ENCODE measurements at regions of chr2 and their contacts with region 1.

Region 1: DNA sequence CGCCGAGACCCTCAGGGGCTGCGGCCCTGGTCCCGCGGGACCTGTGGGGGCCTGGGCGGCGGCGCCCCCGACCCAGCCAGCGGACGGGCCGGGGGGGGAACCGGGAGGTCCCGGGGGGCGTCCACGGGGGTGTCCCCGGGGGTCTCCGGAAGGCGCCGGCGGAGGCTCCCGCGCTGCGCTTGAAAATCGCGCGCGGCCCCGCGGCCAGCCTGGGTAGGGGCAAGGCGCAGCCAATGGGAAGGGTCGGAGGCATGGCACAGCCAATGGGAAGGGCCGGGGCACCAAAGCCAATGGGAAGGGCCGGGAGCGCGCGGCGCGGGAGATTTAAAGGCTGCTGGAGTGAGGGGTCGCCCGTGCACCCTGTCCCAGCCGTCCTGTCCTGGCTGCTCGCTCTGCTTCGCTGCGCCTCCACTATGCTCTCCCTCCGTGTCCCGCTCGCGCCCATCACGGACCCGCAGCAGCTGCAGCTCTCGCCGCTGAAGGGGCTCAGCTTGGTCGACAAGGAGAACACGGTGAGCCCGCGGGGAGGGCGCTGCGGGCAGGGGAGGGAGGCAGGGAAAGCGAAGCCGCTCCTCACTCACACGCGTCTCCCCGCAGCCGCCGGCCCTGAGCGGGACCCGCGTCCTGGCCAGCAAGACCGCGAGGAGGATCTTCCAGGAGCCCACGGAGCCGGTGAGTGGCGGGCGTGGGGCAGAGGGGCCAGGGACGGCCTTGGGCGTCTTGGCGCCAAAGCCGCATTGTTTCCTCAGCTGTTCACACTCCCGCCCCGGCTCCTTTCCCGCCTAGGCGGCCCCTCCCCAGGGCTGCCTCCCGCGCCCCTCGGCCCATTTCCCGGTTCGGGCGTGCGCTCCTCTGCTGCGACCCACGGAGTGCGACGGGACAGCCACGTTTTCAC is at the start of gene RRM2:
- DNase-seq: peak; percentile 76 to 86 (median 84)
- H3K4me3 ChIP-seq: peak within 1 kb of the TSS; percentile 64 to 85 (median 68)
- H3K4me3 Mint-ChIP-seq: peak within 1 kb of the TSS; percentile 89 to 95
- H3K27ac ChIP-seq: peak within 1 kb of the TSS in 1 of 2 donors; percentile 66
- H3K27ac Mint-ChIP-seq: peak within 1 kb of the TSS; percentile 76 to 99 (median 92)
- H3K4me1 ChIP-seq: peaks cover 51 to 77% of the 10 kb centered on the region in 2 donors
- H3K4me1 Mint-ChIP-seq: peaks cover 58% of the 10 kb centered on the region
- H3K27me3 ChIP-seq: no peaks in the 10 kb centered on the region
- H3K27me3 Mint-ChIP-seq: no peaks in the 10 kb centered on the region
- CTCF ChIP-seq: no peak
- polyA plus RNA-seq, gene RRM2: 1.5 TPM in 1 of 3 donors, not detected in the others

Region 2: DNA sequence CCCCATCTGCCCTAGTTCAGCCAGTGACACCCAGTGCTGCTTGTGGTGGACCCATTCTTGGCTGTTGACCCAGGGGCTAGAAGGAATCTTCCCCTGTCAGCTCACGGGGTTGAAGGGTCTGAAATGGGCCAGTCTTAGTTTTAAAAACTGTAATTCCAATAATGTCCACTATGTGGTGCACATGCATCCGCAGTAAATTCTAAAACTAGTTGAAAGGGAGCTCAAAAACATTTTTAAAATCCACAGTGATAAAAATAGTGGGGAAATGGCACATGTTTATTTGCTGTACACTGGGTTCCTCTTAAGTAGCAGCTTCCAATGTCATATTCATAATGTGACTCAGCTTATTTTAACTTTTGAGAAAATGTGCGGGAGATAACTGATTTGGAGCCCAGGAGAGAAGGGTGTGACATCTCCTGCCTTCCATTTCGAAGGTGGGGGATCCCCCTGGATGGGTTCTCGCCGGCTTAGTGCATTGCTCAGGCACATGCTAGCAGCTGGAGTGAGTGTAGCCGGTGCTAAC is 138.4 kb before region 1 on chr2:
- intact Hi-C with region 1: loop called in 1 of 2 experiments (anchors 10 kb)
- DNase-seq: peak; percentile 52 to 74 (median 61)
- H3K4me3 ChIP-seq: no peak overlapping the region
- H3K4me3 Mint-ChIP-seq: peak overlapping the region; percentile 45 to 70
- H3K27ac ChIP-seq: no peak overlapping the region
- H3K27ac Mint-ChIP-seq: peak overlapping the region in 3 of 7 donors; percentile 32 to 73 (median 65)
- H3K4me1 ChIP-seq: peaks cover 3 to 8% of the 10 kb centered on the region in 2 donors
- H3K4me1 Mint-ChIP-seq: peaks cover 7% of the 10 kb centered on the region
- H3K27me3 ChIP-seq: no peaks in the 10 kb centered on the region
- H3K27me3 Mint-ChIP-seq: peaks cover 10 to 17% (median 13%) of the 10 kb centered on the region in 3 donors
- CTCF ChIP-seq: peak; percentile 79

Region 3: GRCh38 chr2:10188216-10188615 is 65.6 kb after region 1 on chr2:
- intact Hi-C with region 1: no loop called
- DNase-seq: no peak
- H3K4me3 ChIP-seq: no peak overlapping the region
- H3K4me3 Mint-ChIP-seq: no peak overlapping the region
- H3K27ac ChIP-seq: no peak overlapping the region
- H3K27ac Mint-ChIP-seq: peak overlapping the region in 2 of 7 donors; percentile 3 to 37
- H3K4me1 ChIP-seq: no peaks in the 10 kb centered on the region
- H3K4me1 Mint-ChIP-seq: no peaks in the 10 kb centered on the region
- H3K27me3 ChIP-seq: no peaks in the 10 kb centered on the region
- H3K27me3 Mint-ChIP-seq: peaks cover 0 to 6% (median 2%) of the 10 kb centered on the region in 3 donors
- CTCF ChIP-seq: no peak

Region 4: GRCh38 chr2:10278029-10278762 is 155.6 kb after region 1 on chr2:
- intact Hi-C with region 1: loop called in 1 of 2 experiments (anchors 10 kb)
- DNase-seq: peak; percentile 95 to 97 (median 95)
- H3K4me3 ChIP-seq: peak overlapping the region in 1 of 3 experiments; percentile 29
- H3K4me3 Mint-ChIP-seq: peak overlapping the region; percentile 42 to 76
- H3K27ac ChIP-seq: peak overlapping the region; percentile 91 to 95
- H3K27ac Mint-ChIP-seq: peak overlapping the region; percentile 93 to 97 (median 96)
- H3K4me1 ChIP-seq: peaks cover 43 to 46% of the 10 kb centered on the region in 2 donors
- H3K4me1 Mint-ChIP-seq: peaks cover 47% of the 10 kb centered on the region
- H3K27me3 ChIP-seq: no peaks in the 10 kb centered on the region
- H3K27me3 Mint-ChIP-seq: peaks cover 0 to 3% (median 2%) of the 10 kb centered on the region in 3 donors
- CTCF ChIP-seq: no peak

Region 5: DNA sequence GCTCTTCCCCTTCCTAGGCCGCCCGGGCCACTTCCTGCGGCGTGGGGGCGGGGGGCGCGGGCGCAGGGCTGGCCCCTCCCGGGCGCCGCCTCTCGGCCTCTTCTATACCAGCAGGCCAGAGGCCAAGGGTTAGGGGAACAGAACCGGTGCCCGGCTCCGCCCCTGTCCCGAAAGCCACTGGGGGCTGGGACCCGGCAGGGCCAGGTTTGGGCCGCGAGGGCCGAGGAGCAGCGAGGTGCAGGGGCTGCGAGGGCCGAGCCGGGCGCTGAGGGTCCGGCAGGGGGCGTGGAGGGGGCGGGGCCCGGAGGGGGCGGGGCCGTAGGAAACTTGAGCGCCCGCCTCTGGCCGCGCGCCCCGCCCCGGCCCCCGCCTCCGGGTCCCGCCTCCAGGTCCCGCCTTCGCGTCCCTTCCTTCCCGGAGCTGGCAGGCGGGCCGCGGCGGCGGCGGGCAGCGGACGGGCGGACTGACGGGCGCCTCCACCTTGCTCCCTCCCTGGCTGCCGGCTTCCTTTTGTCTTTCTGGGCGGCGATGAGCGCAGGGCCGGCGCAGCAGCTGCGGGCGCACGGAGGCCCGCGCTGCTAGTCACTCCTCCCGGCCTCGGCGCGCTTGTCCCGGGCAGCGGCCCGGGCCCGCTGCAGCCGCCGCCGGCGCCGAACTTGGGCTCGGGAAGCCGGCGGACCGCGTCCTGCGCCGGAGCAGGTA is 180.0 kb after region 1 on chr2 and contains the start of gene HPCAL1:
- intact Hi-C with region 1: loop called (anchors 5 to 10 kb)
- DNase-seq: peak; percentile 90 to 91 (median 90)
- H3K4me3 ChIP-seq: peak within 1 kb of the TSS; percentile 79 to 93 (median 84)
- H3K4me3 Mint-ChIP-seq: peak within 1 kb of the TSS; percentile 98 to 100
- H3K27ac ChIP-seq: peak within 1 kb of the TSS; percentile 87 to 94
- H3K27ac Mint-ChIP-seq: peak within 1 kb of the TSS; percentile 83 to 95 (median 92)
- H3K4me1 ChIP-seq: peaks cover 64 to 92% of the 10 kb centered on the region in 2 donors
- H3K4me1 Mint-ChIP-seq: peaks cover 76% of the 10 kb centered on the region
- H3K27me3 ChIP-seq: no peaks in the 10 kb centered on the region
- H3K27me3 Mint-ChIP-seq: peaks cover 0 to 5% (median 4%) of the 10 kb centered on the region in 3 donors
- CTCF ChIP-seq: peak; percentile 76
- polyA plus RNA-seq, gene HPCAL1: 82.1 to 99.5 (median 98.0) TPM

Region 6: DNA sequence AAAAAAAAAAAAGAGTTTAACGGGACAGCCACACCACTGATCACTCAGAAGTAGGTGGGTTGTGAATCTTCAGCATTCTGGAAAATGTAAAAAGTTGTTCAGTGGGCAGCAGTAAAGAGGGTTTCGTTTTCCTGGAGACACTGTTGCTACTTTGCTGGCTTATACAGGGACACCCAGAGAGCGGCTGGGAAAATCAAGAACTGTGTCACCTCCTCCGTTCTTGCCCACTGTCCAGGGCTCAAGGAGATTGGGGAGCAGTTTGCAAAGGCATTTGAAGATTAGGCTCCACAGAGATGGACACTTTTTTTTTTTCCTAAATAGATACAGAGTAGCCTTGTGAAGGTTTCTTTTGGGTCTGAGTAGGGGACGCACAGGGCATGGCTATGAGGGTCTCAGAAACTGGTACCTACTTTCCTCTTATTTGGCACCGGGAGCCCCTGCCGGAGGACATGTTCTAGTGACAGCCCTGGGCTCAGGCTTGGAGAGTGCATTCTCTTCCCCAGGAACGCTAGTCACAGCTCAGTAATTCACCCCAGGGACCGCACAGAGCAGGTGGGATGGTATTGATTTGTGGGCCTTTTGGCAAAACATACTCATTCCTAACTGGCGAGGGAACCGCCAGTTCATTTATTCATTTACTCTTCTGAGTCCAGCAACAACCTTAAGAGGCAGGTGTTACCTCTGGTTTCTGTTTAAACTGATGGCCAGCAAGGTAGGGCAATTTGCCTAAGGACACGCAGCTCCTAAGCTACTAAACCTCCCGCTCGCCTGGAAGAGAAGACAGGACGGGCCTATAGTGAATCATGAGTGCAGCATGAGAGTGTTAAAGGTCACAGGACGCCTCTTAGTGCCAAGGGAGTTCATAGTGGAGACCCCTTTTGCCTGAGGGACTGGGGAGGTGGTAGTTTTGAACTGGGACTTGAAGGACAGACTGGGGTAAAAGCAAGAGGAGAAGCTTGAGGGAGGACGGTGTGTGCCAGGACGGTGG is 233.1 kb after region 1 on chr2:
- intact Hi-C with region 1: no loop called
- DNase-seq: no peak
- H3K4me3 ChIP-seq: no peak overlapping the region
- H3K4me3 Mint-ChIP-seq: no peak overlapping the region
- H3K27ac ChIP-seq: no peak overlapping the region
- H3K27ac Mint-ChIP-seq: peak overlapping the region in 5 of 7 donors; percentile 14 to 74 (median 51)
- H3K4me1 ChIP-seq: peaks cover 13 to 14% of the 10 kb centered on the region in 2 donors
- H3K4me1 Mint-ChIP-seq: peaks cover 27% of the 10 kb centered on the region
- H3K27me3 ChIP-seq: no peaks in the 10 kb centered on the region
- H3K27me3 Mint-ChIP-seq: peaks cover 0 to 4% (median 1%) of the 10 kb centered on the region in 3 donors
- CTCF ChIP-seq: no peak

Region 7: DNA sequence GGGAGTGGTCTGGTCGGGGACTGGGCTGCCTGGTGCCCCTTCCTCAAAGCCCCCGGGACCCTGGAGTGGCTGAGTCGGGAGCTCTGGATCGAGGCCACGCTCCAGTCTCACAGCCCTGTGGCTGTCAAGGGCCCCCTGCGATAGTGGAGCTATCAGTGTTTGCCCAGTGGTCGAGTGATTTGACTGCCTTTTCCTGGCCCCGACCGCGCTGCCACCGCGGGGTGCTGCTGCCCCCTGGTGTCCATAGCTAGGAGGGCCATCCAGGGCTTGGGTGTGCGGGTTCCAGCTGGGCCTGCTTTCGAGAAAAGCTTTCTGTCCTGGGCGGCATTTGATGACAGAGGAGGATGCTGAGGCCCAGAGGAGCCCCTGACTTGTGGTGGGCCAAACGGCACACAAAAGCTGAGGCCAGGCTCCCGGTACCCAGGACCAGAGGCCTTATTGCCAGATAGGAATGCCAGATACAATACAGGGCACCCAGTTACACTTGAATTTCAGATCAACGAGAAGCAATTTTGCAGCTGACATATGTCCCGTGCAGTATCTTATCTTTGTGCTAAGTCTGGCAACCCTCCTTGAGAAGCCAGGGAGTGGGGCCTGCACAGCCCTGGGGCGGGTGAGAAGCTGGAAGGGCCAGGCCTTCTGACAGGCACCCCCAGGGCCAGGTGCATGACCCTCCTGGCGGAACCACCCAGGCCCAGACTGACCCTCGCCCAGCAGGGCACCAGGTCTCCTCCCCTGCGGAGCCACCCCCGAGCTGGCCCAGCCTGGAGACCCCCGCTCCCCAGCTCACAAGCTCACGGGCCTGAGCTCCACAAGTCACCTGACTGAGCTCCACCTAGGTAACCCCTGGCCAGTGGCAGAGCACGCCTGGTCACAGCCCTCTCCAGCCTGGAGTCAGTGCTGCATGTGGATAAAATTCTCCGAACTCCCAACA is 312.5 kb after region 1 on chr2:
- intact Hi-C with region 1: loop called in 1 of 2 experiments (anchors 2 kb)
- DNase-seq: peak; percentile 68 to 73 (median 69)
- H3K4me3 ChIP-seq: no peak overlapping the region
- H3K4me3 Mint-ChIP-seq: no peak overlapping the region
- H3K27ac ChIP-seq: no peak overlapping the region
- H3K27ac Mint-ChIP-seq: no peak overlapping the region
- H3K4me1 ChIP-seq: peaks cover 12 to 17% of the 10 kb centered on the region in 2 donors
- H3K4me1 Mint-ChIP-seq: peaks cover 15% of the 10 kb centered on the region
- H3K27me3 ChIP-seq: peaks cover 0 to 6% of the 10 kb centered on the region in 2 donors
- H3K27me3 Mint-ChIP-seq: peaks cover 7 to 16% (median 8%) of the 10 kb centered on the region in 3 donors
- CTCF ChIP-seq: peak; percentile 96

Region 8: DNA sequence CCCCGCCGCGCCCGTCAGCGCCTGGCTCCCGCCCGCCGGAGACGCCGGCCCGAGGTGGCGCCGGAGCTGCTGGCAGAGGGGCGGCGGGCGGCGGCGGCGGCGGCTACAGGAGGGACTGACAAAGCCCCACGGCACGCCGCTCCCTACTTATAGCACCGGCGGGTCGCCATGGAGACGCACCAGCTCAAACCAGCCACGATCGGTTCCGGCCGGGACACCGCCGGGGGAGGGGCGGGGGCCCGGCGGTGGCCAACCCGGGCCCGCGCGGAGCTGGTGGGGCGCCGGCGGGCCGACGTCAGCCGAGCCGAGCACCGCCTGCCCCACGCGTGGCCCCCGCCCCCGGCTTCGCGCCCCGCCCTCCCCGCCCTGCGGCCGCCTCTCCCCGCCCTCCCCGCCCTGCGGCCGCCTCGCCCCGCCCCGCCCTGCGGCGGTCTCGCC is 325.6 kb after region 1 on chr2 and contains the start of gene ODC1:
- intact Hi-C with region 1: loop called in 1 of 2 experiments (anchors 5 kb)
- DNase-seq: peak; percentile 86 to 92 (median 91)
- H3K4me3 ChIP-seq: peak within 1 kb of the TSS; percentile 50 to 74 (median 58)
- H3K4me3 Mint-ChIP-seq: peak within 1 kb of the TSS; percentile 72 to 94
- H3K27ac ChIP-seq: peak within 1 kb of the TSS; percentile 75 to 83
- H3K27ac Mint-ChIP-seq: peak within 1 kb of the TSS; percentile 69 to 88 (median 82)
- H3K4me1 ChIP-seq: peaks cover 36 to 50% of the 10 kb centered on the region in 2 donors
- H3K4me1 Mint-ChIP-seq: peaks cover 40% of the 10 kb centered on the region
- H3K27me3 ChIP-seq: no peaks in the 10 kb centered on the region
- H3K27me3 Mint-ChIP-seq: no peaks in the 10 kb centered on the region
- CTCF ChIP-seq: no peak
- polyA plus RNA-seq, gene ODC1: 22.7 to 27.3 (median 23.6) TPM

Measured in CD14-positive monocyte (primary cell).